ENCODE measurements at regions of chr10 and their contacts with region 1.

Region 1: GRCh38 chr10:56341612-56342011 is 19.4 kb downstream of the ZWINT start:
- DNase-seq: no peak
- ATAC-seq: no peak
- H3K4me3 ChIP-seq: no peak overlapping the region
- H3K4me3 Mint-ChIP-seq: no peak overlapping the region
- H3K27ac ChIP-seq: no peak overlapping the region
- H3K27ac Mint-ChIP-seq: no peak overlapping the region
- H3K4me1 ChIP-seq: no peaks in the 10 kb centered on the region
- H3K4me1 Mint-ChIP-seq: no peaks in the 10 kb centered on the region
- H3K27me3 ChIP-seq: no peaks in the 10 kb centered on the region
- H3K27me3 Mint-ChIP-seq: no peaks in the 10 kb centered on the region
- CTCF ChIP-seq: no peak

Region 2: DNA sequence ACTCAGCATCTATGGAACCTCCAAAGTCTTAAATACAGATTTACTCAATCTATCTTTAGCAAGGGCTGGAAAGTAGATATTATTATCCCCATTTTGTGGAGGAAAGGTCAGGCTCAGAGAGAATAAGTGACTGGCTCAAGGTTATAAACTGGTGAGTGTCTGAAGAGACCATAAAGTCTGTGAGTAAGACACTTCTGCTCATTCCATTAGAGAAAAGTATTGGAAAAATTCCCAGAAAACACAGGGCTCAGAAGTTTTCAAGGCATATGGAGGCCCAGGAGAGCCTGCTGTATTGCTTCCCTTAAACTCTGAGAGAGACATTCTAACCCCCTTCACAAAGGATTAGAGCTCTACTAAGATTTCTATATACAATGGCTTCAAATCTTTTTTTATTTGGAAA is 1675.4 kb before region 1 on chr10:
- CTCF ChIA-PET with region 1: no interaction called
- POLR2A ChIA-PET with region 1: no interaction called
- intact Hi-C with region 1: loop called (anchors 5 kb)
- DNase-seq: no peak
- ATAC-seq: no peak
- H3K4me3 ChIP-seq: no peak overlapping the region
- H3K4me3 Mint-ChIP-seq: no peak overlapping the region
- H3K27ac ChIP-seq: no peak overlapping the region
- H3K27ac Mint-ChIP-seq: no peak overlapping the region
- H3K4me1 ChIP-seq: no peaks in the 10 kb centered on the region
- H3K4me1 Mint-ChIP-seq: no peaks in the 10 kb centered on the region
- H3K27me3 ChIP-seq: no peaks in the 10 kb centered on the region
- H3K27me3 Mint-ChIP-seq: no peaks in the 10 kb centered on the region
- CTCF ChIP-seq: no peak

Region 3: GRCh38 chr10:56327117-56327516 is 14.5 kb before region 1 on chr10:
- CTCF ChIA-PET with region 1: no interaction called
- POLR2A ChIA-PET with region 1: no interaction called
- intact Hi-C with region 1: no loop called
- DNase-seq: no peak
- ATAC-seq: no peak
- H3K4me3 ChIP-seq: no peak overlapping the region
- H3K4me3 Mint-ChIP-seq: no peak overlapping the region
- H3K27ac ChIP-seq: no peak overlapping the region
- H3K27ac Mint-ChIP-seq: no peak overlapping the region
- H3K4me1 ChIP-seq: no peaks in the 10 kb centered on the region
- H3K4me1 Mint-ChIP-seq: no peaks in the 10 kb centered on the region
- H3K27me3 ChIP-seq: no peaks in the 10 kb centered on the region
- H3K27me3 Mint-ChIP-seq: no peaks in the 10 kb centered on the region
- CTCF ChIP-seq: no peak

Region 4: DNA sequence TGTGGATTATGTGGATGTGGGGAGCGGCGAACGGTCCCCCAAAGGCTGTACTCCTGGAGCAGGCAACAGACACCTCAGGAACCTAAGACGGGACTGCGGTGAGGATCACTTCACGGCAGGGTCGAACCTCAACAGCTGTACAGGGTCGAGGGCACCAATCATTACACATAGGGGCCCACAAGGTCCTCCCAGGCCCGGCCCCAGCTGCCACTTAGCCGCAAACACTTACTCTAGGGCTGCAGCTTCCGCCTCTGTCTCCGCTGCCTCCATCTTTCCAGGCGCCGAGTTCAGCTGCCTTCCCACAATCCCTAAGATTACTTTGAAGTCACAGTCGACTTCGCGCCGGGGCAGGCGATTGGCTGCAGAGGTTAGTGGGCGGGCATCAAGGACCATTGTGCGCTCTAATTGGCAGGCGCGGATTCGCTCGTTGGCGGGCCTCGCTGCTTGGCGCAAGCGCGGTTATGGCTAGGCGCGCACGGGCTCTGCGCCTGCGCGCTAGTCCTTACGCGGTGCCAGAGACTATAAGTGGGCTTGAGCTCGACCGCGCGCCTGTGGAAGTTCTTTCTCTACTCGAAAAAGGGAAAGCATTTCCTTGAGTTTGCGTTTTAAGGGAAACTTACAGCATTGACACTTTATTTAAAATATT is 19.5 kb after region 1 on chr10 and contains the start of gene ZWINT:
- CTCF ChIA-PET with region 1: no interaction called
- POLR2A ChIA-PET with region 1: no interaction called
- intact Hi-C with region 1: no loop called
- DNase-seq: peak; percentile 93
- ATAC-seq: peak; percentile 99
- H3K4me3 ChIP-seq: peak within 1 kb of the TSS; percentile 76 to 93 (median 79)
- H3K4me3 Mint-ChIP-seq: peak within 1 kb of the TSS; percentile 90
- H3K27ac ChIP-seq: peak within 1 kb of the TSS in 1 of 2 donors; percentile 42
- H3K27ac Mint-ChIP-seq: peak within 1 kb of the TSS; percentile 77
- H3K4me1 ChIP-seq: peaks cover 5 to 13% of the 10 kb centered on the region in 2 donors
- H3K4me1 Mint-ChIP-seq: peaks cover 12% of the 10 kb centered on the region
- H3K27me3 ChIP-seq: no peaks in the 10 kb centered on the region
- H3K27me3 Mint-ChIP-seq: no peaks in the 10 kb centered on the region
- CTCF ChIP-seq: no peak
- total RNA-seq, gene ZWINT: 0.83 and 1.1 TPM in 2 replicates

Region 5: GRCh38 chr10:57102234-57102633 is 760.6 kb after region 1 on chr10:
- CTCF ChIA-PET with region 1: no interaction called
- POLR2A ChIA-PET with region 1: no interaction called
- intact Hi-C with region 1: no loop called
- DNase-seq: no peak
- ATAC-seq: no peak
- H3K4me3 ChIP-seq: no peak overlapping the region
- H3K4me3 Mint-ChIP-seq: no peak overlapping the region
- H3K27ac ChIP-seq: no peak overlapping the region
- H3K27ac Mint-ChIP-seq: no peak overlapping the region
- H3K4me1 ChIP-seq: no peaks in the 10 kb centered on the region
- H3K4me1 Mint-ChIP-seq: no peaks in the 10 kb centered on the region
- H3K27me3 ChIP-seq: no peaks in the 10 kb centered on the region
- H3K27me3 Mint-ChIP-seq: no peaks in the 10 kb centered on the region
- CTCF ChIP-seq: no peak

Measured in B cell (primary cell).